BJ (cell line): ENCODE measurements at regions of chr4 and their contacts with region 1.

Region 1: GRCh38 chr4:70704331-70705145 is 16.2 kb downstream of the UTP3 start:
- DNase-seq: no peak
- H3K4me3 ChIP-seq: peak overlapping the region; percentile 81
- H3K27me3 ChIP-seq: no peaks in the 10 kb centered on the region
- CTCF ChIP-seq: peak; percentile 50

Region 2: GRCh38 chr4:70473679-70474078 is 230.9 kb before region 1 on chr4:
- CTCF ChIA-PET with region 1: no interaction called
- POLR2A ChIA-PET with region 1: no interaction called
- DNase-seq: no peak
- H3K4me3 ChIP-seq: no peak overlapping the region
- H3K27me3 ChIP-seq: no peaks in the 10 kb centered on the region
- CTCF ChIP-seq: no peak

Region 3: GRCh38 chr4:70488748-70489147 is 215.8 kb before region 1 on chr4:
- CTCF ChIA-PET with region 1: no interaction called
- POLR2A ChIA-PET with region 1: no interaction called
- DNase-seq: no peak
- H3K4me3 ChIP-seq: no peak overlapping the region
- H3K27me3 ChIP-seq: no peaks in the 10 kb centered on the region
- CTCF ChIP-seq: no peak

Region 4: GRCh38 chr4:70687821-70688794 is 16.4 kb before region 1 on chr4 and contains the start of gene UTP3:
- CTCF ChIA-PET with region 1: interaction called, 13 read pairs
- POLR2A ChIA-PET with region 1: no interaction called
- DNase-seq: peak; percentile 98
- H3K4me3 ChIP-seq: peak within 1 kb of the TSS; percentile 86
- H3K27me3 ChIP-seq: no peaks in the 10 kb centered on the region
- CTCF ChIP-seq: peak; percentile 98
- polyA plus RNA-seq, gene UTP3: 10.4 and 16.8 TPM in 2 replicates

Region 5: DNA sequence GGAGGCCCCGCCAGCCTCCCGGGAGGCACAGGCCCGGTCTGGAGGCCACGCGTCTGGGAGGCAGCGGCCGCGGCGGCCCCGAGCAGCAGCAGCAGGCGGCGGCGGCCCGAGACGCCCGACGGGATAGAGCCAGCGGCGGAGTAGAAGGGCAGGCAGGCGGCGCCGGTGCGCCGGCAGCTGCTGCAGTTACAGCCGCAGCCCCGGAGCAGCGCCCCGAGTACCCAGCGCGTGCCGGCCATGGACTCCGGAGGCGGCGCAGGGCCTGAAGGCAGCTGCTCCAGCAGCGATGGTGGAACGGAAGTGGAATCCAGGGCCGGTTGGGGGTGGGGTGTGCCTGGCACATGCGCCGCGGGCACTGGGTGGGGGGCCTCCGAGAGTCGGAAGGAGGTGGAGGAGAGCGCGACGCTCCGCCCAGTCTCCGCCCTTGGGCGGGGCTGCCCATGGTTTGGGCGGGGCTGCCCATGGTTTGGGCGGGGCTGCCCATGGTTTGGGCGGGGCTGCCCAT is 135.1 kb after region 1 on chr4 and contains the start of gene GRSF1:
- CTCF ChIA-PET with region 1: no interaction called
- POLR2A ChIA-PET with region 1: no interaction called
- DNase-seq: peak; percentile 44
- H3K4me3 ChIP-seq: peak within 1 kb of the TSS; percentile 75
- H3K27me3 ChIP-seq: no peaks in the 10 kb centered on the region
- CTCF ChIP-seq: no peak
- polyA plus RNA-seq, gene GRSF1: 41.9 and 69.2 TPM in 2 replicates